Endothelial cell of umbilical vein (primary cell): ENCODE measurements at regions of chr21 and their contacts with region 1.

Region 1: DNA sequence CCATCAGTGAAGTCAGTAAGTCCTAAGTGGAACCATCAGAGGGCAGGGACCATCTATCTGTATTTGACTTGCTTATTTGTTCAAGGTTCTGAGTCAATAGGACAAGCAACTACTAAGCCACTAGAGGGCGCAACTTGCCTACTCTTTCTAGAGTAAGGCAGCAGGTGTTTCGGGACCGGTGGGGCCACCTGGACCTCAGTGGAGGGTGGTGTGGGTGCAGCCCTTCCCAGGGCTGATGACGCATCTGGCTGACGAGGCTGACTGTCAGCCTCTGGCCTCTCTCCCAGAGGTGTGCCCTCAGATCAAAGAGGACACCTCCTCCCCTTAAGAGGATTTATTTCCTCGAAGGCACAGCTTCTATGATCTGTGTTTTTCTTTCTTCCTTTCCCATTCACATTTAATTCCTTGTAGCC is 6.6 kb downstream of the CBR3 start:
- DNase-seq: peak; percentile 80
- H3K4me3 ChIP-seq: no peak overlapping the region
- H3K27ac ChIP-seq: no peak overlapping the region
- H3K4me1 ChIP-seq: peaks cover under 1% of the 10 kb centered on the region
- H3K27me3 ChIP-seq: no peaks in the 10 kb centered on the region
- CTCF ChIP-seq: peak; percentile 76 to 77
- POLR2A ChIP-seq: no peak

Region 2: GRCh38 chr21:36209626-36210171 is 68.2 kb after region 1 on chr21:
- CTCF ChIA-PET with region 1: interaction called, 31 read pairs
- POLR2A ChIA-PET with region 1: no interaction called
- dilution Hi-C with region 1: no loop called
- intact Hi-C with region 1: no loop called
- DNase-seq: peak; percentile 42
- H3K4me3 ChIP-seq: no peak overlapping the region
- H3K27ac ChIP-seq: peak overlapping the region; percentile 10
- H3K4me1 ChIP-seq: peaks cover 11% of the 10 kb centered on the region
- H3K27me3 ChIP-seq: no peaks in the 10 kb centered on the region
- CTCF ChIP-seq: peak; percentile 42 to 45
- POLR2A ChIP-seq: no peak

Region 3: GRCh38 chr21:36330904-36331303 is 189.4 kb after region 1 on chr21:
- CTCF ChIA-PET with region 1: interaction called, 41 read pairs
- POLR2A ChIA-PET with region 1: no interaction called
- dilution Hi-C with region 1: no loop called
- intact Hi-C with region 1: loop called (anchors 1 kb)
- DNase-seq: peak; percentile 64
- H3K4me3 ChIP-seq: no peak overlapping the region
- H3K27ac ChIP-seq: no peak overlapping the region
- H3K4me1 ChIP-seq: peaks cover 20% of the 10 kb centered on the region
- H3K27me3 ChIP-seq: no peaks in the 10 kb centered on the region
- CTCF ChIP-seq: peak; percentile 65 to 73
- POLR2A ChIP-seq: no peak

Region 4: GRCh38 chr21:36381841-36382589 is 240.5 kb after region 1 on chr21:
- CTCF ChIA-PET with region 1: interaction called, 7 read pairs
- POLR2A ChIA-PET with region 1: no interaction called
- dilution Hi-C with region 1: no loop called
- intact Hi-C with region 1: loop called (anchors 5 kb)
- DNase-seq: peak; percentile 14
- H3K4me3 ChIP-seq: no peak overlapping the region
- H3K27ac ChIP-seq: no peak overlapping the region
- H3K4me1 ChIP-seq: peaks cover 7% of the 10 kb centered on the region
- H3K27me3 ChIP-seq: no peaks in the 10 kb centered on the region
- CTCF ChIP-seq: no peak
- POLR2A ChIP-seq: no peak

Region 5: GRCh38 chr21:36584940-36585542 is 443.5 kb after region 1 on chr21:
- CTCF ChIA-PET with region 1: no interaction called
- POLR2A ChIA-PET with region 1: no interaction called
- dilution Hi-C with region 1: no loop called
- intact Hi-C with region 1: no loop called
- DNase-seq: no peak
- H3K4me3 ChIP-seq: no peak overlapping the region
- H3K27ac ChIP-seq: no peak overlapping the region
- H3K4me1 ChIP-seq: no peaks in the 10 kb centered on the region
- H3K27me3 ChIP-seq: peaks cover 3 to 4% of the 10 kb centered on the region in 2 experiments
- CTCF ChIP-seq: no peak
- POLR2A ChIP-seq: no peak